HEK293T (cell line): ENCODE measurements at regions of chr18 and their contacts with region 1.

Region 1: DNA sequence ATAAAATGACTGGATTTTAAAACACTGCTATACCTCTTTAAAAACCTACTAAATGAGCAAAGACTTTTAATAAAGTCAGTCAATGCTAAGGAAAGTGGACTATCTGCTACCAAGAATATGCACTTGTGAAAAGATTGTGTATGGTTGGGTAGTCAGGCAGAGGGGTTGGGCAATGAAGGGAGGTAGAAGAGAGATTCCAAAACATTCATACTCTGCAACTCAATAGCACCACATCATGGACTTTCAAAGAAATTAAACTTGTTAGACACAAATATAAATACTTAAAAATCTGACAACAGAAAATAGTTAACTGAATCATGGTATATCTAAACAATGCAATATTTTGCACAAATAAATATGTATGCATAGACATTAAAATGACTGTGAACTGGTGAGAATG is 139.9 kb upstream of the MAPRE2 start:
- DNase-seq: no peak

Region 2: DNA sequence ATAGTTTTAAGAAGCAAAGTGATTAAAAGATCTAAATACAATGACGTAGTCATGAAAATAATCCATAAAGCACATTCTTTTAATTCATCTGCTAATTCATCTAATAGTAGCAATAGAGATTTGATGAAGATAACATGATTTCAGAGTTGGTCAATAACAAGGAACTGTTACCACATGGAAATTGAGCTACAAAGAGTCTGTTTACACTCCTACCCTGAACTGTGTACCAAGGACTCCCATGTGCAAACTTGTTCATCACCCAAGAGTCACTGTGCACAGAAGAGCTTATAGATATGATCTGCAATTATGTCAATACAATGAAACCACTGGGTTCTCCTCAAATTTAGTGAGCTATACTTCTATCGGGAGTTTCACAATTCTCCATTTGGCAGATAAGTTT is 269.7 kb before region 1 on chr18:
- CTCF ChIA-PET with region 1: no interaction called
- POLR2A ChIA-PET with region 1: no interaction called
- DNase-seq: no peak

Region 3: DNA sequence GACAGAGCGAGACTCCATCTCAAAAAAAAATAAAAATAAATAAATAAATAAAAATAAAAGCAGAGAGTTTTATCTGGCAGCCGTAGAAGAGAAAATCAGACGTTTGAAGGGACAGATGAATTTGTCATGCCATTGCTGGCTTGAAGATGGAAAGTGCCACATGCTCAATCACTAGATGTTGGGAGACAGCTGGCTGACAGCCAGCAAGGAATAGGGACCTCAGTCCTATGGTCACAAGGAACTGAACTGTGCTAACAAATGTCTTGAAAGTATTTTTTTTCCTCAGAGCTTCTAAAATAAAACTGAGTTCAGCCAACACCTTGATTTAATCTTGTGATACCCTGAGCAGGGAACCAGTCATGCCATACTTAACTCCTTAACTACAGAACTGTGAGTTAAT is 125.8 kb before region 1 on chr18:
- CTCF ChIA-PET with region 1: interaction called, 11 read pairs
- POLR2A ChIA-PET with region 1: no interaction called
- DNase-seq: no peak